AG04450 (cell line): ENCODE measurements at regions of chr1 and their contacts with region 1.

Region 1: DNA sequence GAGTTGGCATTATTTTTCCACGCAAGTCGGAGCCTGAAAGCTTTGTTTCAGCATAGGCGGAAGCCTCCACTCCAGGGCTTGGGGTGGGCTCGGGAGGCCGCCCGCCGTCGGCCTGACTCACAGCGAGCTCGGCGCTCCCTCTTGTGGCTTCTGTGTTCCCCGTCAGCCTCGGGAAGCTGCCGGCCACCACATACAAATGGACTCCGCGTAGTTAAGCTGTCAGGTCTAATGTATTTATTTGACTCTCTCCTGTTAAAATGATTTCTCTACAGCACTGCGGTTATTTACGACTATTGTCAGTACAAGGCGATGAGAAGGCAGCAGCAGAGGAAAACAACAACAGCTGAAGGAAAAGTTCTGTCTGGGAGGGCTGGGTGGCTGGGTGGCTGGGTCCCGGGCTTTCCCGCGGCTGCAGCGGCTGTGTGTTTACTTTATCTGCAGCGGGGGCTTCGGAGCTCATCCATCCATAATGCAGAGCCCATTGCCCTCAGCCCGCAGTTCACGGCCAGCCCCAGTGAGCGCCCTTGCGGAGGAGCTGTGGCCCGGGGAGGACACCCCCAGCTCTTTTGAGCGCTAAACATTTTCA is 375.7 kb upstream of the CAMK1G start:
- DNase-seq: peak; percentile 15
- H3K4me3 ChIP-seq: peak overlapping the region; percentile 28; the same call in 1 of the 2 replicates
- H3K27ac ChIP-seq: no peak overlapping the region
- H3K27me3 ChIP-seq: peaks cover 9% of the 10 kb centered on the region
- CTCF ChIP-seq: peak; percentile 77

Region 2: DNA sequence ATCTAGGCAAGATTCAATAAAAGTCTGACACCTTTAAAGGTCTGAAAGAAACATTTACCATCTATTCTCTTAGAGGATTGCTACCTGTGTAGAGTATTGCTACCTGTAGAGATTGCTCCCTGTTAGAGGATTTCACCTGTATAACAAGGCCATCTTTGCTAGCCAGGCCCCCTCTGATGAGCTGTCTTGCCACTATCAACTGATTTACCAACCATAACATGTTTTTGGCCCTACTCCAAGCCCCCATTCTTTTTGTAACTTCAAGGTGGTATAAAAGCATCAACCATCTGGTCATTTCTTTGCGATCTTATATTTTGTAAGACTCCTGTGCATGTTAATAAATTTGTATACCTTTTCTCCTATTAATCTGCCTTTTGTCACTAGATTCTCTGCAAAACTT is 48.9 kb before region 1 on chr1:
- CTCF ChIA-PET with region 1: no interaction called
- POLR2A ChIA-PET with region 1: no interaction called
- DNase-seq: no peak
- H3K4me3 ChIP-seq: no peak overlapping the region
- H3K27ac ChIP-seq: no peak overlapping the region
- H3K27me3 ChIP-seq: no peaks in the 10 kb centered on the region
- CTCF ChIP-seq: no peak

Region 3: GRCh38 chr1:209435654-209436566 is 228.1 kb after region 1 on chr1:
- CTCF ChIA-PET with region 1: interaction called, 43 read pairs
- POLR2A ChIA-PET with region 1: no interaction called
- DNase-seq: peak; percentile 38
- H3K4me3 ChIP-seq: no peak overlapping the region
- H3K27ac ChIP-seq: no peak overlapping the region
- H3K27me3 ChIP-seq: no peaks in the 10 kb centered on the region
- CTCF ChIP-seq: peak; percentile 97

Region 4: DNA sequence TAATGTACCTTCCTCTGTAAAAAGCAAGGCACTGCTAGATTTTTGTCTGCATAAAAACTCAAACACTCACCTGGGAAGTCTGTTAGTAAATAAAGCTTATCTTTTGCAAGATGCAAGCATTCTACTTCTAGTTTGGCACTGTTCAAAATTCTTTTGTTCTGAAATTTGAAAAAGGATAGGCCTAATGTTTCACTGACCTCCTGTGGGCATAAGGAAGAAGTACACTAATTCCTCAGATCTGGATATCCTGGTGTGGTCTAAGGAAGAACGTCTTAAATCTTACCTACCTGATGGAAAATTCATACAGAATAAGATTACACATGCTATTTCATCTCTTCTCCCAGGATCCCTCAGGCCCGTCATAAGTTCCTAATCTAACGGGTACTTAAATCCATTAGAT is 282.2 kb after region 1 on chr1:
- CTCF ChIA-PET with region 1: interaction called, 13 read pairs
- POLR2A ChIA-PET with region 1: no interaction called
- DNase-seq: no peak
- H3K4me3 ChIP-seq: no peak overlapping the region
- H3K27ac ChIP-seq: no peak overlapping the region
- H3K27me3 ChIP-seq: peaks cover 2% of the 10 kb centered on the region
- CTCF ChIP-seq: peak; percentile 52

Region 5: GRCh38 chr1:209513226-209513625 is 305.4 kb after region 1 on chr1:
- CTCF ChIA-PET with region 1: interaction called, 12 read pairs
- POLR2A ChIA-PET with region 1: no interaction called
- DNase-seq: no peak
- H3K4me3 ChIP-seq: no peak overlapping the region
- H3K27ac ChIP-seq: no peak overlapping the region
- H3K27me3 ChIP-seq: peaks cover 4% of the 10 kb centered on the region
- CTCF ChIP-seq: peak; percentile 69

Region 6: GRCh38 chr1:209945377-209945776 is 737.6 kb after region 1 on chr1:
- CTCF ChIA-PET with region 1: no interaction called
- POLR2A ChIA-PET with region 1: no interaction called
- DNase-seq: no peak
- H3K4me3 ChIP-seq: no peak overlapping the region
- H3K27ac ChIP-seq: no peak overlapping the region
- H3K27me3 ChIP-seq: no peaks in the 10 kb centered on the region
- CTCF ChIP-seq: no peak